Right ventricle myocardium inferior (tissue), 1 donor: ENCODE measurements at regions of chr16 and their contacts with region 1.

Region 1: DNA sequence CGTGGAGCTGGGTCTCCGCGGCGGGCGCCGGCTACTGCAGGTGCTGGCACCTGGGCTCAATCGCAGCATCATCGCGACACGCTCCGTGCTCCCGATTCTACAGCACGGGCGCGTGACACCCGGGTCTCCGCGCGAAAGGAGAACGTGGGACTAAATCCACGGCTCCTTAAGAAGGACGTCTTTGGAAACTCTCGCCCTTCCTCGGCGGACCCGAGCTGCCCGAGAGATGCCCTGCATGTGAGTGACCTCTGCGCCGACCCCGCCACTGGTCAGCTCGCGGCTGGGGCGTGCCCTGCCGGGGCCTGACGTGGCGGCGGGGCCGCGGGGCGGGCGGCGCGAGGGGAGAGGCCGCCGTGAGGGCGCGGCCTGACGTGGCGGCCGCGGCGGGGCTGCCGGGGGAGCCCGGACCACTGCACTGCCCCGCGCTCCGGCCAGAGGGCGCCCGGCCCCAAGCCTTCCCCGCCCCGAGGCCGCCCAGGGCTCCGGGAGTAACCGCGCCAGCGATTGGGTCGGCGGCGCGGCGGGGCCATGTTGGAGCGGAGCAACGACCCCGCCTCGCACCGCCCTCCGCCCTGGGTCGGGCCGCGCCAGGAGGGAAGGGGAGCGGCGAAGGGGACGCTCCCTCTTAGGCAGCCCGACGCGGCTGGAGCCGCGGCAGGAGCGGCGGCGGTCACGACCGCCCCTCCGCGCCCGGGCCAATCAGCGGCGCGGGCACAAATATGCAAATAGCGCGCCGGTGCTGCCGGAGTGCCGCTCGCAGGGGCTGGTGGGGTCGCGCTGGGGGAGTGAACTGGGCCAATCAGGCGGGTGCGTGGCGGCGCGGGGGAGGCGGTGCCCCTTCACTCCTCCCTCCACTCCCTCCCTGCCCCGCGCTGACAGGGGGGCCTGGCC is 75.6 kb downstream of the CHD9 start:
- DNase-seq: peak; percentile 98
- ATAC-seq: peak; percentile 95

Region 2: DNA sequence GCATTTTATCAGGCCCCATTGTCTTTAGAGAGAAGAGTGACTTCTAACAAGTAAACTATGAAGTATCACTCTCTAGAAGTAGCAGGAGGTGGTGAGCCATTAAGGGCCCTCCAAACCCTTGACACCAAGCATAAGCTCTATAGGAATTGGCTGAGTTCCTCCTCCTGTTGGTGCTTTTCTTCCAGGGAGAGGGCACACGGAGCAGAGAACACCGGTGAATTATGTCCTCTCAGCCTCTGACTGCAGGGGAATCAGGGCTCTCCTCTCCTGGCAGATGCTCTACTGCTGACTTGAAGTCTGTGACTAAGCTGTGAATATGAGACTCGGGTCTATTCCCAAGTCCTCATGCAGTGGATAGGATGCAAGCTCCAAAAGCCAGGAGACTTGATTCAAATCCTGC is 43.3 kb before region 1 on chr16:
- intact Hi-C with region 1: no loop called
- DNase-seq: no peak
- ATAC-seq: no peak

Region 3: DNA sequence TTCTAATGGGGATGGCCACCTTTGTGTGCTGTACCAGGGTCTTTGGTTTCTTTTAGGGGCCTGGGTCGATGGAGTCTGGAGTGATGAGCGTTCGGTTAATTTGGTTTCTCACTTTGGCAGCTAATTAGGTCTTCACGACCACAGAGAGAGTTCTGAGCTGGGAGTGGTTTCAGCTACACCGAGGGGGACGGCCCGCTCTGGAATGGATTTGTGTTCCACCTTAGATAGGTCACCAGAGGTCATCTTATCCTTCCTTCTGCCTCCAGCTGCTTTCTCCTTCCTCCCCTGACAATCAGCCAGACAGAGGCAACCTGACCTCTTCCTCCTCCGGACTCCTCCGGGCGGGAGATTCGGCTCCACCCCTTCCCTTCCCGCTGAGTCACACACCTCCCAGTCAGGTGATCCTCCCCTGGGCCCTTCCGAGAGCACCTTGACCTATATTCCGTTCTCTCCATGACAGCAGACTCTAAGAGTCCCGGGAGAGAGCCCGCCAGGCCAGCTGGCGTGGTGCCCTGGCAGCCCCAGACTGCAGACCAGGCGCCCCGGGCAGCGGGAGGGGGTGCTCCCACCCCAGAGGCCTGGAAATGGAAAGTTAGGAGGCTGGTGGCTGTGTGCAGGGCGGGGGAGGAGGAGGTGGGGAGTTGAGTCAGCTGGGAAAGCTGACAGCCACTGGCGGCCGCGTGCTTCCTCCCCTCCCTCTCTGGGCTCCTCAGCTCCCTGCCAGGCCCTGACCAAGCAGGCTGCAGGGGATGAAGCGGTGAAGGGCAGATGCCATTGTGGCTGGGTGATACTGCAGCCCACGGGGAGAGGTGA is 30.9 kb before region 1 on chr16:
- intact Hi-C with region 1: loop called (anchors 1 kb)
- DNase-seq: peak; percentile 94
- ATAC-seq: peak; percentile 91

Region 4: DNA sequence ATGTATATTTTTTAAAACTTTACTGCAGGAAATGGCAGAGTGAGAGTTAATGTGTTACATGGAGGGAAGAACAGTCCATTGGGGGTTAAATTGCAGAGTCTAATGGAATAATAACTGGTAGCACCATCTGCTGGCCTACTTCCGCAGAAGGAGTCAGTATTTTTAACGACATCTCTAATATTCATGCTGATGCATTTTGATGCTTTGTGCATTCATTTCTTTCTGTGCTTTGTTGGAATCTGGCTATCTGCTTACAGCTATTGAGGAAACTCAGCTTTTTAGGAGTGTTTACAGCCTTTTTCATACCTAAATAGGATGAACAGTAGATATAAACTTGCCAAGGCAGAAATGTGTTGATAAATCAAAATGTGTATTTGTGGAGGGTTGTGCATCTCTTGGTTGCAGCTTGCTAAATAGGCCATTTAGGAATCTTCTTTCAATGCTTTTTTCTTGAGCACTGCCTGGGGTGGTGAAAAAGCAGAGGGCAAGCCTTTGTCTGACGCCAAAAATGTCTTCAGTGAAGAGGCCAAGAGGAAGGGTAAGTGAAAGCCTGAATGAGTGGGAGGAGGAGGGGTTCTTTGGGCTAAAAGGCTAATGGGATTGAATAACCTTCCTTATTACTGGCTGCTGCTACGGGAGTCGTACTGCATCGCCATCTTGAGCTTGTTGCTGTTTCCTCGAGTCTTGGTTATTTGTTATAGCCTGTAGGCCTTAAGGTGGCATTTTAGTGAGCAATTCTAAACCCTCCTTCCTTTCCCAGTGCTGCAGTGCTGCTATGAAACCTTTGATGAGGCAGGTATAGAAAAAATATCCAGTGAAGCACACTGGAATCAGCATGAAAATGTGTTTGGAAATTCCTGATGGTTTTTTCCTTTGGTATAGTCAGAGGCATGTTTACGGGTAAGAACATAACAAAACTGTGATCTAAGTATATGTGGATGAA is 77.7 kb after region 1 on chr16:
- intact Hi-C with region 1: loop called (anchors 1 kb)
- DNase-seq: no peak
- ATAC-seq: peak; percentile 95